ENCODE measurements at regions of chr1 and their contacts with region 1.

Region 1: DNA sequence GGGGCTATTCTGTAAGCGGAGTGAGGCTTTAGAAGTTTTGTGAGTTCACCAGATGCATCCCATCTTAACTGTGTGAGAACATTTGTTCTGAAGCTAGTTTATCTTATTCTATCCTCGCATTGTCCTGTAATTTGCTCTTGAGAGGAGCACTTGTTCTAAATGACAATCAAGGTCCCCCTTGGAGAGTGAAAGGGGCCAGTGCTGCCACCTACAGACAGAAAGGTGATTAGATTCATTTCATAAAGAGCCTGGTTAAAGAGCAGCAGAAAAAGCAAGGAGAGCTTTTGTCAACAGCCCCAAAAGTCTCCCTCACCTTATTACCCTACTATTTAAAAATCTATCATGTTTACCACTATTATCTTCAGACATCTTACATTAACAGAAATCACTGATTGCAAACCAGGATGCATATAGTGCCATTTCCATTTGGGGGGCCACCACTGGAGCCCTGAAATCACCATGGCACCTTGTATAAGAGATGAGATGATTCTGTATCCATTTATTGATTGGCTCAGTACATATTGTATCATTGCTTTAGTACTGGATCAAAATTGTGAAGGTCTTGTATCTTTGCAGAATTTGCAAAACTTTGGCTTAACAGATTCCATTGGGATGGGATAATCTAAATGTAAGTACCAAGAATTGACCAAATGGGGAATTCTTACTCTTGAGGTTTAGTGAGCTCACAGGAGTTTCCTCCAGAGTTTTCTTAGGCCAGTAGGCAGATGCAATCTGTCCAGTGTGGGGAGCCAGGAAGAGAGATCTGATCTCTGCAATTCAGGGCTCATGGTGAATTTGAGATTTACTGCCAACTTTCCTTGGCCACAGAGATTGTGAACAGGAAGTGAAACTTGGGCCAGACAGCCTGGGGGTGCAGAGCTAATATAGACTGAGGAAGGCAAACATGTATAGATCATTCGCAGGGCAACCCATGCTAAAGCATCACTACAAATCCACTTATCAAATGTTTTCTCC is 64.3 kb upstream of the TRABD2B start:
- DNase-seq: no peak
- ATAC-seq: peak; percentile 65

Region 2: DNA sequence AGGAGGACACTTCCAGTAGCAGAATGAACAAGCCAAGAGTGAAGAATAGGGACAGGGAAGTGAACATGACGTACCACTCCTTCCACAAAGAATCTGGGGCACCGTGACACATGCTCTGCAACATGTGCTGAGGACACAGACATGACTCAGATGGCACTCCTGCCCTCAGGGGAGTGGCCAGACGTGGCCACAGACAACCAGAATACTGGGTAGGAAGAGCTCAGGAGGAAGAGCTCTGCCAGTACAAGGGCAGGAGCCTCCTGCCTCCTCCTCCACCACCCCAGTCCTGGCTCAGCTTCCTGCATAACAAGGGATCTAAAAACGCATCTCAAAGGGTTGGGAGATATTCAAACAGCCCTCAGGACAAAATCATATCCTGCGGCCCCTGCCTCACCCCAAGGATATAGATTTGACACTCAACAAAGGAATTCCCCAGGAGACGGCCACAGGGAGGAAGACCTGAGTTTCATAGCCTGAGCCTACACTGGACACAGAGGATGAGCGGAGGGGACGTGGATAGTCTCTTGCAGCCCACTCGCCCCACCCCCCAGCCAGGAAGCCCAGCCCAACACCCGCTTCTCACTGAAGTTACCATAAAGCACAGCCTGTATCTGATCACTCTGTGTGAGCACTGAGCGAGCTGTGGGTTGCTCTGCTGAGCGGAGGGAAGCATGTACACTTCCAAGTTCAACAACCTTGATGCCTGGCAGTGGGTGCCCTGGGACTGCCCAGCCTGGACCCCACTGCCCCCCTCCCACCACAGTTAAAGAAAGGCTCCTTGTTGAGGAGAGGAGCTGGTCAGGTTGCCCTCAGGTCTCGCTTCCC is 166.5 kb before region 1 on chr1:
- intact Hi-C with region 1: loop called (anchors 10 kb)
- DNase-seq: no peak
- ATAC-seq: peak; percentile 35